Calu3 (cell line): ENCODE measurements at regions of chr12 and their contacts with region 1.

Region 1: DNA sequence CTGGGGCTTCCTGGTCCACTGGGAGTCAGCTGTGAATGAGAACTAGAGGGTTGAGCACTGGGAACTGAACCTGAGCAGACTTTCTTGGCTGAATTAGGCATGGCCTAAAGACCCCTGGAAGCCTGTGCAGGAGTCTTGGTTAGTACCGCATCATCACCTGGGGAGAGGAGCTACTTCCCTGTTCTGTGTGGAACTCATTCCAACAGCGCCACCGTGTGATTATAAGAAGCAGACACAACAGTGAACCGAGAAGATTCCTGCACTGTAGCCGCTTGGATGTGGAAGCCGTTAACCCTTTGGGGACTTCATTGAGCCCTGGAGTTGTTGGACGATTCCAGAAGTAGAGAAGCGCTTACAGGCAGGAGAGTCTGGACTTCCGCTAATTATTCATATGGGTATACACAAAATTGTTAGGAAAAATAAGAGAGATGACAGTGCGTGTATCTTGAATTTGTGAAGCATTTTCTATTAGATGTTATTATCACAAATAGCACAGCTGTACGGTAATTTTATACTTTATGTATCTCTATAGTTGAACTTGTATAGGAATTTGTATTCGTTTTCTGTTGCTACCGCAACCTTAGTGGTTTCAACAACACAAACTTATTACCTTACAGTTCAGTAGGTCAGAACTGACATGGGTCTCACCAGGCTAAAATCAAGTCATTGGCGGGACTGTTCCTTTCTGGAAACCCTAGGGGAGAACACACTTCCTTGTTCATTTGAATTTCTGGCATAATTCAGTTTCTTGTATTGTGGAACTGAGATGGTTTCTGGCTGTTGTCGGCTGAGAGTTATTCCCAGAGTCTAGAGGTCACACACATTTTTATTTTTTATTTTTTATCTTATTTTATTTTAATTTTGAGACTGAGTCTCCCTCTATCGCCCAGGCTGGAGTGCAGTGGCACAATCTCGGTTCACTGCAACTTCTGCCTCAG is 100.7 kb downstream of the C2CD5 start:
- DNase-seq: peak; percentile 69
- H3K4me3 Mint-ChIP-seq: no peak overlapping the region
- H3K27ac Mint-ChIP-seq: no peak overlapping the region
- H3K4me1 Mint-ChIP-seq: no peaks in the 10 kb centered on the region
- H3K27me3 Mint-ChIP-seq: no peaks in the 10 kb centered on the region
- CTCF ChIP-seq: peak; percentile 81

Region 2: DNA sequence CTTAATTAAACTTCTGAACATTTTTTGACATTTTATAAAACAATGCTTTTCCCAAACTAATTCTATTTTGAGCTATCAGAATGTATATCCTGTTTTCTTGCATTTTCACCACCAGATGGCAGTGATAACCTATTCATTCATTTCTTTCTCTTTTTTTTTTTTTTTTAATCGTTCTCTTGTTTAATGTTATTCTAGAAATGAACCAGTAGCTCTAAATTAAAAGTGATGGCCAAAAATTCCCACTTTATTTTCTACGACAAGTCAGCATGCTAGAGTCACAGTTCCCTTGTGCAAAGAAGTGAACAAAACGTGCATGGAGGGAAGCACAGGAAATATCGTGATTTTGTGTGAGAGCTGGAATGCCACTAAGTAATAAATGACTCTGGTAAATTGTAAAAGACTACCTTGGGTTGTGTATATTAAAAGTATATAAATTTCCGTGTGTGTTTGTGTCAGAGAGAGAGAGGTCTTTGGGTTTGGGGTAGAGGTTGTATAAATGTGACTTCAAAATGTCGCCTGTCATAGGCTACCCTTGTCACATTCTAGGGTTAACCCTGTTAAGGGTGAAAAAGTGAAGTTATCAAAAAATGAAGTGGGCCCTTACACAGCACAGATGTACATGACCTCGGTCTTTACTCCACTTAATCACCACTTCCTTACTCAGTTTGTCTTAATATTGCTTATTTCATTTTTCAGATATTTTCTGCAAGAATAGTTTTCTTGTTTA is 745.6 kb before region 1 on chr12:
- CTCF ChIA-PET with region 1: interaction called, 5 read pairs
- intact Hi-C with region 1: loop called (anchors 5 kb)
- DNase-seq: no peak
- H3K4me3 Mint-ChIP-seq: no peak overlapping the region
- H3K27ac Mint-ChIP-seq: no peak overlapping the region
- H3K4me1 Mint-ChIP-seq: no peaks in the 10 kb centered on the region
- H3K27me3 Mint-ChIP-seq: no peaks in the 10 kb centered on the region
- CTCF ChIP-seq: peak; percentile 49

Region 3: GRCh38 chr12:22083167-22083566 is 360.5 kb before region 1 on chr12:
- CTCF ChIA-PET with region 1: interaction called, 7 read pairs
- intact Hi-C with region 1: loop called (anchors 1 kb)
- DNase-seq: peak; percentile 17
- H3K4me3 Mint-ChIP-seq: no peak overlapping the region
- H3K27ac Mint-ChIP-seq: no peak overlapping the region
- H3K4me1 Mint-ChIP-seq: no peaks in the 10 kb centered on the region
- H3K27me3 Mint-ChIP-seq: no peaks in the 10 kb centered on the region
- CTCF ChIP-seq: no peak

Region 4: DNA sequence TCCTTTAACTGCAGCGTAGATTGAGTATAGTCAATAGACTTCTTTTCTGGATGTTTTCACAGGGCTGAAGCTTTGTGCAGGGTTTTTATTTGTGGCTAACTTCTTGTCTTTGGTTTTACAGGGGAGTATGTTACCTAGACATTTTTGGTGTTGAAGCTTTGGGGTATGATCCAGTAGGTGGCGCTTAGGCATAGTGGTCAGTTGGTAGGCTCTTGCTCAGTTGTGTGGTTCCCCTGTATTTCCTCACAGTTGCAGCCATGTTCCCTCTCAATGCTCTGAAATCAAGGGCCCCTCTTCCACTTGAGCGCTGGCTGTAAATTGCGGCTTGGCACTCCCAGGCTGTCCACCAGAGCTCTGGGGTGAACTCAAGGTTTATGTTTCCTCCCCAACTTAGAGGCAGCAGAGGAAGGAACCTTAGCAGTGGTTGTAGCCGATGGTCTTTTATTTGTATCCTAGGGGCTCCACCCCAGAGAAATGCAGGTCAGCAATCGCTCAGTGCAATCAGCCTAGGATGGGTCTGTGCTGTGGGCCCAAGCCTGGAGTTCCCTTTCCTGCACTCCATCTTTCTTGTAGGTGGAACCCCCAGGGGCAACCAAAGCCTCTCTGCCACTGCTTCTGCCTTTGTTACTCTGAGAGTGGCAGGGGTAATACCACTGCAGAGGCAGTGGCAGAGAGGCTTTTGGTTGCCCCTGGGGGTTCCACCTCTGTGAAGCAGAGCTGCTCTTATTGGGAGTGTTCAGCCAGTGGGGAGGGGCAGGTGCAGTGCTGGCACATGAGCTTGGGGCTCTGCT is 342.5 kb before region 1 on chr12:
- CTCF ChIA-PET with region 1: interaction called, 6 read pairs
- intact Hi-C with region 1: loop called (anchors 1 kb)
- DNase-seq: peak; percentile 50
- H3K4me3 Mint-ChIP-seq: no peak overlapping the region
- H3K27ac Mint-ChIP-seq: no peak overlapping the region
- H3K4me1 Mint-ChIP-seq: no peaks in the 10 kb centered on the region
- H3K27me3 Mint-ChIP-seq: peaks cover 30% of the 10 kb centered on the region
- CTCF ChIP-seq: peak; percentile 45

Region 5: GRCh38 chr12:22334410-22335290 is 109.0 kb before region 1 on chr12 and contains the start of gene ST8SIA1:
- CTCF ChIA-PET with region 1: no interaction called
- intact Hi-C with region 1: loop called (anchors 5 kb)
- DNase-seq: no peak
- H3K4me3 Mint-ChIP-seq: peak within 1 kb of the TSS; percentile 74
- H3K27ac Mint-ChIP-seq: no peak within 1 kb of the TSS
- H3K4me1 Mint-ChIP-seq: no peaks in the 10 kb centered on the region
- H3K27me3 Mint-ChIP-seq: peaks cover 11% of the 10 kb centered on the region
- CTCF ChIP-seq: no peak
- total RNA-seq, gene ST8SIA1: not detected in 2 replicates

Region 6: GRCh38 chr12:22396253-22396652 is 47.4 kb before region 1 on chr12:
- CTCF ChIA-PET with region 1: no interaction called
- intact Hi-C with region 1: loop called (anchors 5 kb)
- DNase-seq: no peak
- H3K4me3 Mint-ChIP-seq: no peak overlapping the region
- H3K27ac Mint-ChIP-seq: peak overlapping the region; percentile 64
- H3K4me1 Mint-ChIP-seq: peaks cover 16% of the 10 kb centered on the region
- H3K27me3 Mint-ChIP-seq: peaks cover 6% of the 10 kb centered on the region
- CTCF ChIP-seq: no peak